Endothelial cell of umbilical vein (primary cell): ENCODE measurements at regions of chr14 and their contacts with region 1.

Region 1: DNA sequence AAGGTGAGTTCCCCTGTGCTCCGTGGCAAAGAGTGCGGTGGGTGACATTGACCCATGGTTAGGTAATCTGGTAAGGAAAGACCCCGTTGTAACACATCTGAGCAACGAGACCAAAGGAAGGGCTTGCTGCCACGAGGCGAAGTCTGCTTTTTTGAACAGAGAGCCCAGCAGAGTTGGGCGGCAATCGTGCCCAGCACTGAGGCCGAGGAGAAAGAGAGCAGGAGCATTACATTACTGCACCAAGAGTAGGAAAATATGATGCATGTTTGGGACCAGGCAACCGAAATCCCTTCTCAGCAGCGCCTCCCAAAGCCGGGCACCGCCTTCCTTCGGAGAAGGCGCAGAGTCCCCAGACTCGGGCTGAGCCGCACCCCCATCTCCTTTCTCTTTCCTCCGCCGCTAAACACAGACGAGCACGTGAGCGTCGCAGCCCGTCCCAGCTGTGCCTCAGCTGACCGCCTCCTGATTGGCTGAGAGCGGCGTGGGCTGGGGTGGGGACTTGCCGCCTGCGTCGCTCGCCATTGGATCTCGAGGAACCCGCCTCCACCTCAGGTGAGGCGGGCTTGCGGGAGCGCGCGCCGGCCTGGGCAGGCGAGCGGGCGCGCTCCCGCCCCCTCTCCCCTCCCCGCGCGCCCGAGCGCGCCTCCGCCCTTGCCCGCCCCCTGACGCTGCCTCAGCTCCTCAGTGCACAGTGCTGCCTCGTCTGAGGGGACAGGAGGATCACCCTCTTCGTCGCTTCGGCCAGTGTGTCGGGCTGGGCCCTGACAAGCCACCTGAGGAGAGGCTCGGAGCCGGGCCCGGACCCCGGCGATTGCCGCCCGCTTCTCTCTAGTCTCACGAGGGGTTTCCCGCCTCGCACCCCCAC is at the start of gene HIF1A:
- DNase-seq: peak; percentile 99
- H3K4me3 ChIP-seq: peak within 1 kb of the TSS; percentile 88 to 100 (median 99)
- H3K27ac ChIP-seq: peak within 1 kb of the TSS; percentile 84
- H3K4me1 ChIP-seq: peaks cover 30% of the 10 kb centered on the region
- H3K27me3 ChIP-seq: no peaks in the 10 kb centered on the region
- CTCF ChIP-seq: peak in 1 of 2 donors; percentile 12
- POLR2A ChIP-seq: peak; percentile 97
- total RNA-seq, gene HIF1A: 179 and 180 TPM in 2 replicates

Region 2: GRCh38 chr14:61503167-61503801 is 191.8 kb before region 1 on chr14:
- CTCF ChIA-PET with region 1: no interaction called
- POLR2A ChIA-PET with region 1: no interaction called
- dilution Hi-C with region 1: no loop called
- intact Hi-C with region 1: loop called (anchors 1 kb)
- DNase-seq: peak; percentile 93
- H3K4me3 ChIP-seq: peak overlapping the region in 1 of 3 experiments; percentile 15
- H3K27ac ChIP-seq: peak overlapping the region; percentile 81
- H3K4me1 ChIP-seq: peaks cover 27% of the 10 kb centered on the region
- H3K27me3 ChIP-seq: no peaks in the 10 kb centered on the region
- CTCF ChIP-seq: no peak
- POLR2A ChIP-seq: no peak

Region 3: GRCh38 chr14:61609191-61609843 is 85.7 kb before region 1 on chr14:
- CTCF ChIA-PET with region 1: interaction called, 6 read pairs
- POLR2A ChIA-PET with region 1: interaction called, 6 read pairs
- dilution Hi-C with region 1: no loop called
- intact Hi-C with region 1: loop called (anchors 1 kb)
- DNase-seq: peak; percentile 87
- H3K4me3 ChIP-seq: peak overlapping the region in 1 of 3 experiments; percentile 3
- H3K27ac ChIP-seq: peak overlapping the region; percentile 74
- H3K4me1 ChIP-seq: peaks cover 24% of the 10 kb centered on the region
- H3K27me3 ChIP-seq: no peaks in the 10 kb centered on the region
- CTCF ChIP-seq: no peak
- POLR2A ChIP-seq: no peak

Region 4: GRCh38 chr14:61622078-61622477 is 73.0 kb before region 1 on chr14:
- CTCF ChIA-PET with region 1: no interaction called
- POLR2A ChIA-PET with region 1: no interaction called
- dilution Hi-C with region 1: no loop called
- intact Hi-C with region 1: no loop called
- DNase-seq: no peak
- H3K4me3 ChIP-seq: no peak overlapping the region
- H3K27ac ChIP-seq: no peak overlapping the region
- H3K4me1 ChIP-seq: peaks cover 17% of the 10 kb centered on the region
- H3K27me3 ChIP-seq: no peaks in the 10 kb centered on the region
- CTCF ChIP-seq: no peak
- POLR2A ChIP-seq: no peak

Region 5: GRCh38 chr14:61662437-61663311 is 32.4 kb before region 1 on chr14:
- CTCF ChIA-PET with region 1: interaction called, 4 read pairs
- POLR2A ChIA-PET with region 1: no interaction called
- dilution Hi-C with region 1: no loop called
- intact Hi-C with region 1: loop called (anchors 2 kb)
- DNase-seq: peak; percentile 49
- H3K4me3 ChIP-seq: no peak overlapping the region
- H3K27ac ChIP-seq: peak overlapping the region; percentile 66
- H3K4me1 ChIP-seq: peaks cover 29% of the 10 kb centered on the region
- H3K27me3 ChIP-seq: no peaks in the 10 kb centered on the region
- CTCF ChIP-seq: no peak
- POLR2A ChIP-seq: no peak

Region 6: DNA sequence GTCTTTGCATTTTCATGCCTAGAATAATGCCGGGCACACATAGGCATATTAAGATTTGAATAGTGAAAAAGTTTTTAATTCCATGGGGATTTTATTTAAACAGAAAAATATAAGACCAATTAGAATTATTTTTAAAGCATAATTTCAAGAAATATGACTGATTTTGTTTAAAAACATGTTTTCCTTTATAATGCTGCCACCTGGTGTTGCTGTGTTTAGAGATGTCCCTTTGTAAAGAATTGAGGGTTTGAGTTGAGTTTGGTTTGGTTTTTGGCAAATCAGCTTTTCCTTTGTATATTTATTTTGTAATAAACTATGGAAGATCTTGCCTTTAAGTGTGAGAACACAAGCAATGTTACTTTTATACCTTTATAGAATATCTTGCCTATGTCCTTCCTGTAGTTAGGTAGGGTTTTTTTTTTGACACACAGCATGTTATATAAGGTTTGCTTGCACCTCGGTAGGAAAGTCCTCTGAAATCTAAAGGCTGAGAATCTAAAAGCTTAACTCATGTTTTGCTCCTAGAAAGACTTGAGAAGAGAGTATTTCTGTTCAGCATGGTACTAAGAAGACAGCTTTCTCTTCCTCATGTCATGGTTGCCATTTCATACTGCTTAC is 35.8 kb after region 1 on chr14:
- CTCF ChIA-PET with region 1: interaction called, 13 read pairs
- POLR2A ChIA-PET with region 1: no interaction called
- dilution Hi-C with region 1: no loop called
- intact Hi-C with region 1: loop called (anchors 2 kb)
- DNase-seq: peak; percentile 54
- H3K4me3 ChIP-seq: no peak overlapping the region
- H3K27ac ChIP-seq: no peak overlapping the region
- H3K4me1 ChIP-seq: no peaks in the 10 kb centered on the region
- H3K27me3 ChIP-seq: no peaks in the 10 kb centered on the region
- CTCF ChIP-seq: peak; percentile 2 to 18
- POLR2A ChIP-seq: no peak

Region 7: GRCh38 chr14:61837336-61838229 is 142.5 kb after region 1 on chr14:
- CTCF ChIA-PET with region 1: no interaction called
- POLR2A ChIA-PET with region 1: no interaction called
- dilution Hi-C with region 1: no loop called
- intact Hi-C with region 1: loop called (anchors 2 kb)
- DNase-seq: peak; percentile 84
- H3K4me3 ChIP-seq: no peak overlapping the region
- H3K27ac ChIP-seq: peak overlapping the region; percentile 72
- H3K4me1 ChIP-seq: peaks cover 34% of the 10 kb centered on the region
- H3K27me3 ChIP-seq: no peaks in the 10 kb centered on the region
- CTCF ChIP-seq: peak; percentile 85
- POLR2A ChIP-seq: no peak